ENCODE measurements at regions of chr7 and their contacts with region 1.

Region 1: DNA sequence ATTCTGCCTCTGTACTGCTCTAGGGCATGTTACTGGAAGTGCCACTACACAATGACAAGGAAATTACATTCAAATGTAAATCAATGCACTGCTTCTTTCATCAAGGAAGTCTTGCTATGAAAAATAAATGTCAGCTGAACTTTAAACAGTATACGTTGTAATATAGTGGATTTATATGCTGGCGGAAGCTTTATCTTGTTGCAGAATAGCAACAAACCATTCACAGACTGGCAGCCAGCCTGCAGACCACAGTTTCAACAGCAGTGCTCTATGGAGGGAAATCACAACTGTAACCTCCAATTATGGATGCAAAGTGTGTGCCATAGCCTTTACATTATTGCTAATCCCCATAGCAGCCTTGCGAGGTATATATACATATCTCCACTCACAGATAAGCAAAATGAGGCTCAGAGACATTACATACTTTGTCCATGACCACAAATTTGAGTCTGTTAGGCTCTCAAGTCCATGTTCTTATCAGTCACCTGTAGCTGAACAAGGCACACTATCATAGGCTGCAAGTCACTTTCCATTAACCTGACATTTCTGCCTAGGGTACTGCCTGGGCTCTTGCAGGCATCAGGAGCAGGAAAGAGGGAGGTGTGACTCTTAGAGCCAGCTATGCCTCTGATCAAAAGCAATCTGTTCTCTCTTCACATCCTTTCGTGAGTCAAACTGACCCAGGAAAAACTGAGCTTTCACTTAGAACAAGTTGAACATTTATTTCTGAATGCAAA is 22.6 kb downstream of the COL28A1 start:
- DNase-seq: peak; percentile 26
- H3K4me3 Mint-ChIP-seq: no peak overlapping the region
- H3K27ac Mint-ChIP-seq: peak overlapping the region; percentile 45
- H3K4me1 Mint-ChIP-seq: peaks cover 34% of the 10 kb centered on the region
- H3K27me3 Mint-ChIP-seq: no peaks in the 10 kb centered on the region
- CTCF ChIP-seq: no peak

Region 2: GRCh38 chr7:7489546-7489945 is 23.5 kb before region 1 on chr7:
- CTCF ChIA-PET with region 1: interaction called, 4 read pairs
- intact Hi-C with region 1: loop called (anchors 2 kb)
- DNase-seq: peak; percentile 42
- H3K4me3 Mint-ChIP-seq: no peak overlapping the region
- H3K27ac Mint-ChIP-seq: peak overlapping the region; percentile 0
- H3K4me1 Mint-ChIP-seq: peaks cover 30% of the 10 kb centered on the region
- H3K27me3 Mint-ChIP-seq: no peaks in the 10 kb centered on the region
- CTCF ChIP-seq: no peak

Measured in Calu3 (cell line).